ENCODE measurements at regions of chr9 and their contacts with region 1.

Region 1: DNA sequence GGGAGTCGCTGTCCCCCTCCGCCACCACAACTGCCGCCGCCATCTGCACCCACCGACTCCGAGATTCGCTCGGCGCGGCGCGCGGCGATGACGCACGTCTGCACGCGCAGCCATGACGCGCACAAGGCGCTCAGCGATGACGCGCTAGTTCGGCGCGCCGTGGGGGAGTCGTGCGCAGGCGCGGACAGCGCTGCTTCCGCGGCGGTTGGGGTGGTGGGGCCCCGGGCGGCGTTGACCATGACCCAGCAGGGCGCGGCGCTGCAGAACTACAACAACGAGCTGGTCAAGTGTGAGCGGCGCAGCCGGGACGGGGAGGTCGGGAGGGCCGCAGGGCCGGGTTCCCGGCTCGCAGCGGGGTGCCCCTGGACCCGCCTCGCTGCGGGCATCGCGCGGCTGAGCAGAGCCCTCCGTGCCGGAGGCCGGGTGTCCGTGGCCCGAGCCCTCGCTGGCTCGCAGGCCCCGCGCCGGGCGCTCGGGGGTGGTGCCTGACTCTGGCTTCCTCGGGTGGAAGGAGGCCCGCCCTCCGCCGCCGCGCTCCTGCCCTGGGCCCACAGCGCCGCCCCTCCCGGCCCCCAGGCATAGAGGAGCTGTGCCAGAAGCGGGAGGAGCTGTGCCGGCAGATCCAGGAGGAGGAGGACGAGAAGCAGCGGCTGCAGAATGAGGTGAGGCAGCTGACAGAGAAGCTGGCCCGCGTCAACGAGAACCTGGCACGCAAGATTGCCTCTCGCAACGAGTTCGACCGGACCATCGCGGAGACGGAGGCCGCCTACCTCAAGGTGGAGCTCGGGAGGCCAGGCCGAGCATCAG is at the starts of genes ANAPC2 and SSNA1:
- DNase-seq: peak; percentile 99
- H3K4me3 ChIP-seq: peak within 1 kb of the TSS; percentile 71 to 84
- H3K27ac ChIP-seq: peak within 1 kb of the TSS; percentile 91 to 95
- H3K4me1 ChIP-seq: peaks cover 12 to 33% of the 10 kb centered on the region in 2 experiments; a peak in 3 of 4 replicates
- H3K27me3 ChIP-seq: no peaks in the 10 kb centered on the region
- CTCF ChIP-seq: peak; percentile 47
- EP300 ChIP-seq: no peak; a peak in 1 of 4 replicates
- RAD21 ChIP-seq: peak; percentile 53
- polyA plus RNA-seq, gene ANAPC2: 35.1 and 37.7 TPM in 2 replicates
- polyA plus RNA-seq, gene SSNA1: 100 and 124 TPM in 2 replicates

Region 2: GRCh38 chr9:137168905-137169856 is 19.5 kb before region 1 on chr9:
- CTCF ChIA-PET with region 1: interaction called, 24 read pairs
- POLR2A ChIA-PET with region 1: interaction called, 3 read pairs
- DNase-seq: peak; percentile 83
- H3K4me3 ChIP-seq: peak overlapping the region; percentile 34 to 37; a peak in 3 of 4 replicates
- H3K27ac ChIP-seq: no peak overlapping the region
- H3K4me1 ChIP-seq: peaks cover 0 to 23% of the 10 kb centered on the region in 2 experiments; a peak in 1 of 4 replicates
- H3K27me3 ChIP-seq: peaks cover 40% of the 10 kb centered on the region
- CTCF ChIP-seq: no peak
- EP300 ChIP-seq: no peak
- RAD21 ChIP-seq: no peak

Region 3: DNA sequence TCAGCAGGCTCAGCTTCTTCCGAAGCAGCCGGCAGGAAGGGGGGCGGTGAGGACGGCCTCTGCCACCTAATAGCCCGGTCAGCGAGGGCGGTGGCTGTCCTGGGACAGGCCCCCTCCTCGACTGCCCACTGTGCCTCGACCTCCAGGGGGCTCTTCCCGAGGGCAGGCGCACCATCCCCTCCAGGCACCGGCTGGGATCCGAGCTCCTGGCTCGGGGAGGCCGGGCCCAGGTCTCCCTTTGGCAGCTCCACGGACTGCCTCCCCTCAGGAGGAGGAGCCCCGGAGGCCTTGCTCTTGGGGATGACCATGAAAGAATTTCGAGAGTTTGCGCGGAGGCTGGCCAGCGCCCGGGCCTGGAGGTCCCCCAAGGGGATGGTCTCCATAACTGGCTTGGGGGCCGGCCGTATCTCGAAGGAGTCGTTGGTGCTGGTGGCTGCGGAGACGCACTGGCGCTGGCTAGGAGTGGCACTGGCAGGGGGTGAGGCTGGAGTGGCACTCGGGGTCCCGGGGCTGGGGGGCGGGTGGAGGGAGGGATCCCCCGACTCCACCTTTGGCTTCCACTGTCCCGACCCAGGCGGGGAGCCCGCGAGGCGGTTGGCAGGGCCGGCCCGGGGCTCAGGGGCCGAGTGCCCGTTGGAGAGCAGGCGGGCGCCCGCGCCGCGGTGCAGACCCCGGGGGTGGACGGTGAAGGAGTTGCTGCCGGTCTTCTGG is 10.9 kb after region 1 on chr9:
- CTCF ChIA-PET with region 1: interaction called, 6 read pairs
- POLR2A ChIA-PET with region 1: interaction called, 20 read pairs
- DNase-seq: no peak
- H3K4me3 ChIP-seq: peak overlapping the region; percentile 41 to 83; a peak in 2 of 4 replicates
- H3K27ac ChIP-seq: no peak overlapping the region
- H3K4me1 ChIP-seq: peaks cover 15 to 41% of the 10 kb centered on the region in 2 experiments; a peak in 3 of 4 replicates
- H3K27me3 ChIP-seq: no peaks in the 10 kb centered on the region
- CTCF ChIP-seq: no peak
- EP300 ChIP-seq: no peak
- RAD21 ChIP-seq: no peak

Region 4: DNA sequence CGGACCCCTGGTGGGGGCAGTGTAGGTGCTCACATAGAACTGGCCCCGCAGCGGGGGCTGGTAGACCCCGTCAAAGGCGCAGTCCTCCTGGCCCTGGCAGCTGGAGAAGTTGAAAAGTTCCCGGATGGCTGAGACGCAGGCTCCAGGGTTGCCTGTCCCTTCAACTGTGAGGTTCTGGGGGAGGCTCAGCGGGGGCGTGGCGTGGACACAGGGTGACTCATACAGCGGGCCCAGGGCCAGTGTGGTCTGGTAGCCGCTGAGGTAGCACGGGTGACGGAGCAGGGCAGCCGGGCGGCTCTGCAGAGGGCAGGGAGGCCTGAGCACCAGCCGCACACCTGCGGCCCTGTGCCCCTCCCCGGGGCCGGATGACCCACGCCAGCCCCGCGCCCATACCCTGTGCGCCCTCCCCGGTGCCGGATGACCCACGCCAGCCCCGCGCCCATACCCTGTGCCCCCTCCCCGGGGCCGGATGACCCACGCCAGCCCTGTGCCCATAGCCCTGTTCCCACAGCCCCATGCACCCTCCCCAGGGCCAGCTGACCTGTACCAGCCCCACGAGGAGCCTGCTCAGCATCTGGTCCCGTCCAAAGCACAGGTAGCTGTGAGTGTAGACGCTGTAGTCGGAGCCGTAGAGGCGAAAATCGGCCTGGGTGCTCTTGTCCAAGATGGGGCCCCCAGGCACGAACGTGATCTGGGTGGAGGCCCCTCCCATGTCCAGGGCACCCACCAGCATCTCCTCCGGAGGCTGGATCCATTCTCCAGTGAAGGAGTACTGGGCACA is 247.5 kb after region 1 on chr9:
- CTCF ChIA-PET with region 1: no interaction called
- POLR2A ChIA-PET with region 1: no interaction called
- DNase-seq: peak; percentile 65
- H3K4me3 ChIP-seq: no peak overlapping the region
- H3K27ac ChIP-seq: peak overlapping the region in 1 of 2 experiments; percentile 24; a peak in 1 of 4 replicates
- H3K4me1 ChIP-seq: peaks cover 1 to 4% of the 10 kb centered on the region in 2 experiments; a peak in 2 of 4 replicates
- H3K27me3 ChIP-seq: no peaks in the 10 kb centered on the region
- CTCF ChIP-seq: no peak
- EP300 ChIP-seq: no peak
- RAD21 ChIP-seq: no peak